Activated CD8-positive, alpha-beta T cell treated with anti-CD3 and anti-CD28 coated beads for 36 hours (primary cell): ENCODE measurements at regions of chr6 and their contacts with region 1.

Region 1: GRCh38 chr6:6547110-6547879 is 41.2 kb upstream of the LY86 start:
- DNase-seq: peak; percentile 86
- ATAC-seq: peak; percentile 95
- H3K4me3 Mint-ChIP-seq: peak overlapping the region; percentile 64
- H3K27ac Mint-ChIP-seq: no peak overlapping the region
- H3K4me1 Mint-ChIP-seq: no peaks in the 10 kb centered on the region
- H3K27me3 Mint-ChIP-seq: peaks cover 31% of the 10 kb centered on the region
- CTCF ChIP-seq: peak; percentile 96

Region 2: GRCh38 chr6:6057424-6058053 is 489.8 kb before region 1 on chr6:
- CTCF ChIA-PET with region 1: interaction called, 41 read pairs
- POLR2A ChIA-PET with region 1: no interaction called
- intact Hi-C with region 1: loop called (anchors 2 kb)
- DNase-seq: no peak
- ATAC-seq: no peak
- H3K4me3 Mint-ChIP-seq: no peak overlapping the region
- H3K27ac Mint-ChIP-seq: no peak overlapping the region
- H3K4me1 Mint-ChIP-seq: no peaks in the 10 kb centered on the region
- H3K27me3 Mint-ChIP-seq: peaks cover 27% of the 10 kb centered on the region
- CTCF ChIP-seq: peak; percentile 58

Region 3: DNA sequence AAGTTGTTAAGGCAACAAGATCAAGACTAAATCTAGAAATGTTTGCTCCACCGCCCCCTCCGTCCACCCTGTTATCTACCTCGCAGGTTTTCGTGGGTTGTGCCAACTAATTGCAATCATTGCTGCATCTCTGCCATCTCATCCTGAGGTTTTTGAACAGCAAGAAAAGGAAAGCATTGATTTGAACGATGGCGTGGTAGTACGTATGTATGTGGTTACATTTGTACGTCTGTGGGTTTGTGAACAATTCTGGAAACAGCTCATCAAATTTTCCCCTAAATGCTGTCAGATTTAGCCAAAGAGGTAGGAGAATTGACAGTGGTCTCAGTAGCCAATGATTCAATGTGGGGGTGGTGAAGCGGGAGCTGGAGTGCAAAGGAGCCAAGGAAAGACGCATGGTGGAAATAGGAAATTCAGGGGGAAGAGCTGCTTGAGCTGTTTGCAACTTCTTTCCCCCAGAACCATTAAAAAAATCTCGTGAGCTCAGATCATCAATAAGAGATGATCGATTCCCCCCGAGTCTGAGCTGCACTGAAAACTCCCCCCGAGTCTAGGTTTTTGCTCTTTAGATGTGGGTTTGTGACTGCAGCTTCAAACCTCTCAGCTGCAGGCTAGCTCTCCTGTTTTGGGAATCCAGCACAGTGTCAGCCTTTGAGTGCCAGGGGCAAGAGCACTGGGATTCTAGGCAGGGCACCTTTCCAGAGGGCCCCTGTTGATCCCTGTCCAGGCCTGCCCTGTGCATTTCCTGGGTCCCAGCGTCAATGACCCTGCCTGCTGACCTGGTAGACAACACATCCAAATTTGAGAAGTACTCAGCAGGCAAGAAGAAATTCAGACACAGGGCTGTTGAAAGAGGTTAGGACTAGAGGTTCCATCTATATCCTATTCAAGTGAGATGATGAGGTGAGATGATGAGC is 31.3 kb before region 1 on chr6:
- CTCF ChIA-PET with region 1: interaction called, 18 read pairs
- POLR2A ChIA-PET with region 1: no interaction called
- intact Hi-C with region 1: no loop called
- DNase-seq: peak; percentile 87
- ATAC-seq: peak; percentile 85
- H3K4me3 Mint-ChIP-seq: no peak overlapping the region
- H3K27ac Mint-ChIP-seq: peak overlapping the region; percentile 2
- H3K4me1 Mint-ChIP-seq: peaks cover 42% of the 10 kb centered on the region
- H3K27me3 Mint-ChIP-seq: peaks cover 62% of the 10 kb centered on the region
- CTCF ChIP-seq: no peak

Region 4: DNA sequence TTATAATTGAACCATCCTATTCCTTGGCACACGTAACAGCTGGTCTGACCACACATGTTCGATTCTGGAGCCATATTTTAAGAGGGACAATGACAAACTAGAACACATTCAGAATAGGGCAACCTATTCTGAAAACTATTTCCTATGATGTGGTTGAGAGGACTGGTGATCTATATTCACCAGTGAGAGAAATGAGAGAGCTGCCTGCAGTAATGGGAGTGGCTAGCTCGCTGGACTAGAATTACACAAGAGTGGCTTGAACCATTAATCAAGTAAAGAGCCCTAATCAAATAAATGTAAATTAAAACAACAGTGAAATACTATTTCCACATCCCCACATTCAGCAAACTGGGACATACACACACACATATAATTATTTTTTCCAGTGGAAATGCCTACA is 14.1 kb before region 1 on chr6:
- CTCF ChIA-PET with region 1: interaction called, 12 read pairs
- POLR2A ChIA-PET with region 1: no interaction called
- intact Hi-C with region 1: no loop called
- DNase-seq: no peak
- ATAC-seq: no peak
- H3K4me3 Mint-ChIP-seq: no peak overlapping the region
- H3K27ac Mint-ChIP-seq: no peak overlapping the region
- H3K4me1 Mint-ChIP-seq: no peaks in the 10 kb centered on the region
- H3K27me3 Mint-ChIP-seq: peaks cover 17% of the 10 kb centered on the region
- CTCF ChIP-seq: no peak

Region 5: DNA sequence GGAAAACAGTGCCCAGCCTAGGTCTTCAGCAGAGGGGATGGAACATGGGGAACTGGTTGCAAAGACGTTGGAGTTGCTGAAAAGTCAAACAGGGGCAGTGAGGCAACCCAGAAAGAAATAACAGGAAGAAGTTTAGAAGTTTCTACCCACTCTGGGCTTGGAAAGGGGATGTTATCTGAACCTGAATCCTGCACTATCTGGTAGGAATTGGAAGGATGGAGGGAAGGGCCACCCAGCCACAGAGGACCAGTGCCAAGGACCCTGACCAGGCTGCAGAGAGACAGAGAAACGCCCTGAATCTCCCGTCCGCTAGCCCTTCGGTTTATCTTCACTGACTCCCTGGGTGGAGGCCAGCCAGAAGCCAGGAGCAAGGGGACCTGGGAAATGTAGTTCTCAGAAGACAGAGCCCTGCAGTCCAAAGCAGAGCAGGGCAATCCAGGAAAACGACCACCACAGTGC is 343.1 kb after region 1 on chr6:
- CTCF ChIA-PET with region 1: no interaction called
- POLR2A ChIA-PET with region 1: no interaction called
- intact Hi-C with region 1: no loop called
- DNase-seq: no peak
- ATAC-seq: no peak
- H3K4me3 Mint-ChIP-seq: no peak overlapping the region
- H3K27ac Mint-ChIP-seq: no peak overlapping the region
- H3K4me1 Mint-ChIP-seq: peaks cover 4% of the 10 kb centered on the region
- H3K27me3 Mint-ChIP-seq: no peaks in the 10 kb centered on the region
- CTCF ChIP-seq: no peak